ENCODE measurements at regions of chr7 and their contacts with region 1.

Region 1: GRCh38 chr7:22154143-22154529 is 202.8 kb downstream of the RAPGEF5 start:
- DNase-seq: no peak
- CTCF ChIP-seq: no peak

Region 2: GRCh38 chr7:22140578-22140977 is 13.6 kb before region 1 on chr7:
- CTCF ChIA-PET with region 1: interaction called, 11 read pairs
- POLR2A ChIA-PET with region 1: no interaction called
- DNase-seq: no peak
- CTCF ChIP-seq: no peak

Region 3: DNA sequence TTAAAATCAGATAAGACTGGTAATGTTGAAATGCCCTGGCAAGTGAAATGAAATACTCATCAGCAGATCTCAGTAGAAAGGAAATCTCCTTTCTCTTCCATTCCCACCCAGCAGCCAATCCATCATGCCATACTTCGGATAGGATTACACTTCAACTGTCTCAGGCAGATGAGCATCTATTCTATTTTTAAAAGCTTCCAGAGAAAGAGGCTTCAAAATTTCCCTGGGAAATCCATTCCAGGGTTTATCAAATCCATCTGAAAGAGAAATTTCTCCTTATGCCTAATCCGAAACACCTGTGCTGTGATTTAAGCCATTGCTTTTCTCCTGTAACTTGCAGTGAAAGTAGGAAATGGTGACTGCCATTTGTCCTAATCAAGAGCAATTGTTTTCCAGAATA is 263.2 kb after region 1 on chr7:
- CTCF ChIA-PET with region 1: no interaction called
- POLR2A ChIA-PET with region 1: no interaction called
- DNase-seq: no peak
- CTCF ChIP-seq: no peak